Posterior vena cava (tissue), 2 donors: ENCODE measurements at regions of chr9 and their contacts with region 1.

Region 1: GRCh38 chr9:85258823-85259370 is 482.9 kb downstream of the AGTPBP1 start:
- DNase-seq: peak; percentile 86

Region 2: GRCh38 chr9:84397151-84397728 is 861.7 kb before region 1 on chr9:
- intact Hi-C with region 1: loop called in 1 of 2 experiments (anchors 10 kb)
- DNase-seq: peak; percentile 82

Region 3: GRCh38 chr9:84408416-84408815 is 850.5 kb before region 1 on chr9:
- intact Hi-C with region 1: loop called in 1 of 2 experiments (anchors 5 kb)
- DNase-seq: no peak

Region 4: GRCh38 chr9:84953797-84954705 is 304.8 kb before region 1 on chr9:
- intact Hi-C with region 1: loop called in 1 of 2 experiments (anchors 10 kb)
- DNase-seq: peak; percentile 94